GM12878 (cell line): ENCODE measurements at regions of chr14 and their contacts with region 1.

Region 1: DNA sequence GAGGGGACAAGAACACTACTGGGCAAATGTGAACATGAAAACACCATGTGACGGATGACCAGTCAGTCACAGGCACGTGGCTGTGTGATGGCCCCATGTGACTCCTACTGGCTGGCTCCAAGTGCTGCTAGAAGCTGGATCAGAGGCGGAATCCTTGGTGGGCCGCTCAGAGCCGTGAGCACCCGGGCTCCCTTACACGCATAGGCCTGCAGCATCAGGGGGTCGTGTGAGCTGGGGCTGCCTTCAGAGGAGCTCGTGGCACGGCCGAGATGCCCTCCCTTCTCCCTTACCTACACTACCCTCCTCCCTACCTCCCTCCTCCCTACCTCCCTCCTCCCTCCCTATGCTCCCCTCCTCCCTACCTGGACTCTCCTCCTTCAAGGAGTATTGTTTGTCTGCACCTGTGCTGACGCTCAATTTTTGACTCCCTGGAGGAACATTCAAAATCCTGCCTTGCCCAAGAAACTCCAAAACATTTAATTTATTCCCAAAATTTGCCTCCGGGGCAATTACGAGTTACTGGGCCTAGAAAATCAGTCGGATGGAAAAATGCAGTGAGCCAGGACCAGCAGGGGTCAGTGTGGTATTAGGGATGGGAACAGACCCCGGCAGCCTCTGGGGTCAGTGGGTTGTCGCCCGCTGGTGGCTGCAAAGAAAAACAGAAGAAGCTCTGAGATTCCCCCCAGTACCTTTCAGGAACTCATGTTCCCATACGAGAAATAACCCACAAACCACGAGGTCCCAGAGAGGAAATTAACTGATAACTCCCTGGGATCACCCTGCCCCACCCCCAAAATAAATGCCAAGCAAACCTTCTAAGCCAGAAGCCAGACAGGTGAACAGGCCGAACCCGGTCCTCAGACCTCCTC is 61.2 kb downstream of the C14orf132 start:
- DNase-seq: peak; percentile 15
- ATAC-seq: peak; percentile 73
- H3K4me3 ChIP-seq: no peak overlapping the region
- H3K27ac ChIP-seq: no peak overlapping the region
- H3K4me1 ChIP-seq: no peaks in the 10 kb centered on the region
- H3K27me3 ChIP-seq: no peaks in the 10 kb centered on the region
- CTCF ChIP-seq: peak; percentile 72 to 94 (median 79)
- EP300 ChIP-seq: no peak
- POLR2A ChIP-seq: no peak
- RAD21 ChIP-seq: peak; percentile 87

Region 2: GRCh38 chr14:95237121-95237876 is 863.1 kb before region 1 on chr14:
- CTCF ChIA-PET with region 1: no interaction called
- POLR2A ChIA-PET with region 1: no interaction called
- RAD21 ChIA-PET with region 1: no interaction called
- SMC1A ChIA-PET with region 1: no interaction called
- in situ Hi-C with region 1: no loop called
- intact Hi-C with region 1: no loop called
- DNase-seq: no peak
- ATAC-seq: no peak
- H3K4me3 ChIP-seq: no peak overlapping the region
- H3K27ac ChIP-seq: no peak overlapping the region
- H3K4me1 ChIP-seq: peaks cover 21% of the 10 kb centered on the region
- H3K27me3 ChIP-seq: no peaks in the 10 kb centered on the region
- CTCF ChIP-seq: no peak
- EP300 ChIP-seq: no peak
- POLR2A ChIP-seq: no peak
- RAD21 ChIP-seq: no peak

Region 3: DNA sequence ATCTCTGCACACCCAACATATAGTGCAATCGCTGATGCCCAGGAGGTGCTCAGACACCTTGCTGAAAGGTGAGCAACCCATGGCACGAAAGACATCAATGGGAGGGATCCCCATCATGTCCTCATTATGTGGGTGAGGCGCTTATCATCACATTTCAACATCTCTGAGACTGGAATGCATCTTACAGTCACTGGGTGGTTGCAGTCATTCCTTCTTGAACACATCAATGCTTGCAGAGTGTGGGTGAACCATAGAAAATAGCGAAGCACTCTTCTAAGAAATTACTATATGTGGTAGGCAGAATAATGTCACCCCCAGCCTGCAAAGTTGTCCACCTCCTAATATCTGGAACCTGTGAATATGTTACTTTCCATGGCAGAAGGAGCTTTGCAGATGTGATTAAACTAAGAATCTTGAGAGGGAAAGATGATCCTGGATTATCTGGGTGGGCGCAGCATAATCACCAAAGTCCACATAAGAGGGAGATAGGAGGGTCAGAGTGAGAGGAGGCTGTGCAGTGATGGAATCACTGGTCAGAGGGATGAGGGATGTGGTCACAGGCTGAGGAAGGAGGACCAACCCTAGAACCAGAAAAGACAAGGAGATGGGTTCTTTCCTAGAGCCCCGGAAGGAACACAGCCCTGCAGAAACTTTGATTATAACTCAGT is 514.3 kb before region 1 on chr14:
- CTCF ChIA-PET with region 1: no interaction called
- POLR2A ChIA-PET with region 1: no interaction called
- RAD21 ChIA-PET with region 1: no interaction called
- SMC1A ChIA-PET with region 1: no interaction called
- in situ Hi-C with region 1: no loop called
- intact Hi-C with region 1: no loop called
- DNase-seq: no peak
- ATAC-seq: no peak
- H3K4me3 ChIP-seq: no peak overlapping the region
- H3K27ac ChIP-seq: no peak overlapping the region
- H3K4me1 ChIP-seq: no peaks in the 10 kb centered on the region
- H3K27me3 ChIP-seq: peaks cover 0 to 8% of the 10 kb centered on the region in 2 experiments; a peak in 3 of 4 replicates
- CTCF ChIP-seq: no peak
- EP300 ChIP-seq: no peak
- POLR2A ChIP-seq: no peak
- RAD21 ChIP-seq: no peak

Region 4: GRCh38 chr14:95993768-95994592 is 106.4 kb before region 1 on chr14:
- CTCF ChIA-PET with region 1: interaction called, 31 read pairs
- POLR2A ChIA-PET with region 1: no interaction called
- RAD21 ChIA-PET with region 1: interaction called, 16 read pairs
- SMC1A ChIA-PET with region 1: interaction called, 15 read pairs
- in situ Hi-C with region 1: no loop called
- intact Hi-C with region 1: loop called (anchors 1 kb)
- DNase-seq: peak; percentile 17
- ATAC-seq: peak; percentile 75
- H3K4me3 ChIP-seq: no peak overlapping the region
- H3K27ac ChIP-seq: no peak overlapping the region
- H3K4me1 ChIP-seq: no peaks in the 10 kb centered on the region
- H3K27me3 ChIP-seq: peaks cover 0 to 2% of the 10 kb centered on the region in 2 experiments; a peak in 2 of 4 replicates
- CTCF ChIP-seq: peak; percentile 78 to 80 (median 79)
- EP300 ChIP-seq: no peak
- POLR2A ChIP-seq: no peak
- RAD21 ChIP-seq: peak; percentile 93

Region 5: DNA sequence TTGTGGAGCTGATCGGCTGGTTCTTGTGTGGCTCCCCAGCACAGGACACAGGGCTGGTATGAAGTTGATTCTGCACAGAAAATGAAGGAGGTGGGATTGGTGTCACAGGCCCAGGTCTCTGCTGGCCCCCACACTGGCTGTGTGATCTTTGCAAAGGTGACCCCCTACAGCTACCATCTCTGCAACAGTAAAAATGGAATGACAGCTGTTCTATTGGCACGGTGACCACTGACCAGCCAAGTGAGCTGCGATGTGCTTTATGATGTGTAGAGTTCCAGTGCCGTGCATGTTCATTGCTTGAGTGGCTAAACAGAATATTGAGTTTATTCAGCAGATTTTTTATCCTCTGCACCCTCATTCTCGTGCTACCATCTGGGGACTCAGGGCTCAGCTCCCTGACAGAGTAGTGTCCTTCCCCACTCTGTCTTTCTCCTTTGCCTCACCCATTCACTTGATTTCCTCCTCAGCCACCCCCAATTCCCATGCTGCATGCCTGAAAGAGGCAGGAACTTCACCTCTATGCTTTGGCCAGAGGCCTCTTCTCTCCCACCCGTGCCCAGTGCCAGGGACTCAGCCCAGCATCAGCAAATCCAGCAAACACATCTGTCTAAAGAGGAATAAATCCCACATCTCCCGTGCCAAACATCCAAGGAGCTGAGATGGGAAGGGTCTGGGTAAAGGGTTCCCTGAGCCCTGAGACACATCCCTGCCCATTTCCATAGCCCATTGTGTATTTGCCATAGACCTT is 40.0 kb before region 1 on chr14:
- CTCF ChIA-PET with region 1: interaction called, 82 read pairs
- POLR2A ChIA-PET with region 1: interaction called, 3 read pairs
- RAD21 ChIA-PET with region 1: interaction called, 41 read pairs
- SMC1A ChIA-PET with region 1: interaction called, 42 read pairs
- in situ Hi-C with region 1: no loop called
- intact Hi-C with region 1: loop called (anchors 1 kb)
- DNase-seq: no peak
- ATAC-seq: no peak
- H3K4me3 ChIP-seq: no peak overlapping the region
- H3K27ac ChIP-seq: no peak overlapping the region
- H3K4me1 ChIP-seq: no peaks in the 10 kb centered on the region; the same call in 1 of the 2 replicates
- H3K27me3 ChIP-seq: peaks cover 0 to 4% of the 10 kb centered on the region in 2 experiments
- CTCF ChIP-seq: no peak
- EP300 ChIP-seq: no peak
- POLR2A ChIP-seq: no peak
- RAD21 ChIP-seq: no peak

Region 6: GRCh38 chr14:96083667-96084320 is 16.6 kb before region 1 on chr14:
- CTCF ChIA-PET with region 1: interaction called, 12 read pairs
- POLR2A ChIA-PET with region 1: no interaction called
- RAD21 ChIA-PET with region 1: interaction called, 5 read pairs
- SMC1A ChIA-PET with region 1: interaction called, 9 read pairs
- in situ Hi-C with region 1: no loop called
- intact Hi-C with region 1: no loop called
- DNase-seq: no peak
- ATAC-seq: no peak
- H3K4me3 ChIP-seq: no peak overlapping the region
- H3K27ac ChIP-seq: no peak overlapping the region
- H3K4me1 ChIP-seq: peaks cover 4% of the 10 kb centered on the region
- H3K27me3 ChIP-seq: peaks cover 0 to 6% of the 10 kb centered on the region in 2 experiments; a peak in 2 of 4 replicates
- CTCF ChIP-seq: no peak
- EP300 ChIP-seq: no peak
- POLR2A ChIP-seq: no peak
- RAD21 ChIP-seq: no peak

Region 7: GRCh38 chr14:96136352-96137005 is 36.1 kb after region 1 on chr14:
- CTCF ChIA-PET with region 1: no interaction called
- POLR2A ChIA-PET with region 1: no interaction called
- RAD21 ChIA-PET with region 1: no interaction called
- SMC1A ChIA-PET with region 1: no interaction called
- in situ Hi-C with region 1: no loop called
- intact Hi-C with region 1: no loop called
- DNase-seq: no peak
- ATAC-seq: no peak
- H3K4me3 ChIP-seq: no peak overlapping the region
- H3K27ac ChIP-seq: no peak overlapping the region
- H3K4me1 ChIP-seq: no peaks in the 10 kb centered on the region
- H3K27me3 ChIP-seq: no peaks in the 10 kb centered on the region; a peak in 1 of 4 replicates
- CTCF ChIP-seq: no peak
- EP300 ChIP-seq: no peak
- POLR2A ChIP-seq: no peak
- RAD21 ChIP-seq: no peak

Region 8: DNA sequence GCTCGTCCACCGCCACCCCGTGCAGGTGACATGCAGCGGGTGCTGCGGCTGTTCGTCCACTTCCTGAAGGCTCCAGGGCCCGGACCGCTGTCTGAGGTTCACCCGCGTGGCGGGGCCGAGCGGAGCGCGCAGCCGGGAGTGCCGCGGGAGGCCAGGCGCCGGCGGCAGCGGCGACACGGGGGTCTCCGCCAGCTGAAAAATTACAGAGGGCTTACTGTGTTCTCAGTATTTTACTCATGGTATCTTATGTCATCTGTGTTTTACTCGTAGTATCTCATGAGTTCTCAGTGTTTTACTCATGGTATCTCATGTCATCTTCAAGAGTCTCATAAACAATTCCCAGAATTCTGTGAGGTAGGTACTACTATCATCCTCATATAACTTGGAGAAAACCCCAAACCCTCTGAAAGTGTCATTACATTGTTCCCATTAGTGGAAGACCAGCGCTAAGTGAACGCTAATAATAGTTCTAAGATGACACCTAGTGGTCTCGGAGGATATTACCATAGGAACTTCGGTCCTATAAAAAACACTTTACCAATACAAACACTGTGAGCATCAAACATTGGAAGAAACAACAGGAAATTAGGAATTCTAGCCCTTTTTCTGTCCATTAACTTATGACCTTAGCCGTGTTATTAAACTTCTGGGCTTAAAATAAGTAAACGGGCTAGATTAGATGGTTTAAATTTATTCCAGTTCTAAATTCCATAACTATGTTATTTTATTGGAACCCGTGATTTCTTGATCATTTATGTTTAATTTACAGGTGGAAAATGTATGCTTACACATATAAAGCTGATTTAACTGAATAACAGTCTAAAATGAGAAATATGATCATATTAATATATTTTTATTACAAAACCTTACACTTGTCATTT is 324.0 kb after region 1 on chr14:
- CTCF ChIA-PET with region 1: no interaction called
- POLR2A ChIA-PET with region 1: no interaction called
- RAD21 ChIA-PET with region 1: no interaction called
- SMC1A ChIA-PET with region 1: no interaction called
- in situ Hi-C with region 1: loop called (anchors 10 kb)
- intact Hi-C with region 1: loop called (anchors 1 kb)
- DNase-seq: peak; percentile 45
- ATAC-seq: peak; percentile 93
- H3K4me3 ChIP-seq: peak overlapping the region; percentile 64
- H3K27ac ChIP-seq: no peak overlapping the region
- H3K4me1 ChIP-seq: no peaks in the 10 kb centered on the region
- H3K27me3 ChIP-seq: no peaks in the 10 kb centered on the region
- CTCF ChIP-seq: peak; percentile 53 to 86 (median 66); a peak in 5 of 6 replicates
- EP300 ChIP-seq: no peak
- POLR2A ChIP-seq: no peak
- RAD21 ChIP-seq: peak; percentile 91